ENCODE measurements at regions of chr14 and their contacts with region 1.

Region 1: DNA sequence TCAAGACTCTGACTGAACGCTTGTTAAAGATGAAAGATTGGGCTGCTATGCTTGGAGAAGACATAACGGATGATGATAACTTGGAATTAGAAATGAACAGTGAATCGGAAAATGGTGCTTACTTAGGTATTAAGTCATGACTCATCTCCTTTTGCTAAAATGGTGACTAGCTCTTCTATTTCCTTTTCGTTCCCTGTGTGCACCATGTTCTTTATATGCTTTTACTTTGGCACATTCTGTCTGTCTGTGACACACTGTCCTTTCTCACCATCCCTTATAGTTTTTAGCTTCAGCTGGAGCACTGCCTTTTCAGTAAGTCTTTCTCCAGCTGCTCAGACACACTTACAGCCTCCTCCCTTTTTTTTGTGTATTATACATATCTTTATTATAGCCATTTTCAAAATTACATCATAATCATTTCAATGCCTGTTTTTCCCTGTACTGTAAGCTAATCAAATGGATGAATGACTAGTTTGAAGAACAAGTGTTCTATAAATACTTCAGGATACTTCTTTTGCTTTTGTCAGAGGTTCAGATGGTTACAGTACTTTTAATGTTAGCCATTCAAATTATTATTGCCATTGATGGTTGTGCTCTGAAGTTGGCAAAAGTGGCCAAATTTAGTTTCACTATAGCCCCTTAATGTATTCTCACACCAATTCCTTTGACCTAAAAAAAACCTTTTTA is 68.6 kb downstream of the MIA2 start:
- DNase-seq: no peak
- H3K4me3 ChIP-seq: no peak overlapping the region
- CTCF ChIP-seq: no peak
- POLR2A ChIP-seq: no peak

Region 2: DNA sequence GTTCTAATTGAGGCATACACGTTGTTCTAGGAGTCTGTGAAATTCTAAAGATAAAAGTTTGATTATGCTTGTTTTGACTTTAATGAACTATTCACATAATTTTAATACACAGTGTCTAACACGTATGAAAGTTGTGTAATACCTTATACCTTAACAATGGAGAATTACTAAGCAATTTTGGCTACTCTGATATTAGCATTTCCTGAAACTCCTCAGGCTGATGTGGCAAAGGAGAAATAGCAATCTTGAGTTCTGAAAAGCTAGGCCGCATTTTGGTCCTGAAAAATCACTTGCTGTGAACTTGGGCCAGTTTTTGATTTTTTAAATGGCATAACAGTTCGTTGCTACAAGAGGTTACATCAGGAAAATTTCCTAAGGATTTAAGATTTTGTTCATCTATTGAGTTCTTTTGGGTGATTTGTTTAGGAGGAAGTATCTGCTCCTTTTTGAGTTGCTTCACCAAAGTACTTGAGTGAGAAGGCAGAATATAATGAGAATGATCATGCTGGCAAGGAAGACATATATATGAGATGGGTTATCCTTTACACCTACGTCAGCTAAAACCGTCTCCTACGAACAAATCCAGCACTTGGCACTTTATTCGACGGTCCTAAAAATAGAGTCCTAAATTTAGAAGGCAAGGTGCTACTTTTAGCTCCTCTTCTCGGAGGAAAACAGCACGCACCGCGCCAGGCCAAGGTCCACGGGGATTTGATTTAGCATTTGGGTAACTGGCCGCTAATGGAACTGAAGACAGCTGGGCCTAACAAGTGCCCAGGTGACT is 36.3 kb before region 1 on chr14:
- intact Hi-C with region 1: loop called (anchors 2 kb)
- DNase-seq: no peak
- H3K4me3 ChIP-seq: peak overlapping the region; percentile 90
- CTCF ChIP-seq: no peak
- POLR2A ChIP-seq: no peak

Measured in lower leg skin (tissue), 4 donors.